ENCODE measurements at regions of chr12 and their contacts with region 1.

Region 1: DNA sequence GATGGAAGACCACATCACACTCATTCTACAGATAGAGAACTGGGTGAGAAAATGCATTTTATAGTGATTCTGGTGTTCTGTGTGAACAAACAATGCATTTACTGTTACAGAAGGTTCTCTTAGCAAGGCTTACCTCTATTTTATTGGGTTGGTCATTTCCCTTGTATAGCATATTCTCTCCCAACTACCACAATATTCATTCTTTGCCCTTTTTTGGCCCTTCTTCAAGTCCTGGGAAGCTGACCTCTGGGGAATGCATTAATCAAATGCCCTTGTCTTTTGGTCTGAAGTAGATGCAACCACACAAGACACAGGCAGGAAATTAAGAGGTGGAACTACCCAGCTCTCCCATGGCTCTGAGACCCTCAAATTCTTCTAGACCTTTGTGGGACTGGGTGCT is 19.5 kb downstream of the DCN start:
- DNase-seq: no peak
- ATAC-seq: no peak
- H3K4me3 ChIP-seq: no peak overlapping the region
- H3K27ac ChIP-seq: no peak overlapping the region
- H3K4me1 ChIP-seq: no peaks in the 10 kb centered on the region
- H3K27me3 ChIP-seq: no peaks in the 10 kb centered on the region
- CTCF ChIP-seq: no peak
- EP300 ChIP-seq: no peak
- POLR2A ChIP-seq: no peak
- RAD21 ChIP-seq: no peak

Region 2: GRCh38 chr12:89789862-89790261 is 1373.3 kb before region 1 on chr12:
- CTCF ChIA-PET with region 1: no interaction called
- POLR2A ChIA-PET with region 1: no interaction called
- in situ Hi-C with region 1: no loop called
- intact Hi-C with region 1: loop called (anchors 5 kb)
- DNase-seq: no peak
- ATAC-seq: no peak
- H3K4me3 ChIP-seq: no peak overlapping the region
- H3K27ac ChIP-seq: no peak overlapping the region
- H3K4me1 ChIP-seq: no peaks in the 10 kb centered on the region
- H3K27me3 ChIP-seq: no peaks in the 10 kb centered on the region
- CTCF ChIP-seq: no peak
- EP300 ChIP-seq: no peak
- POLR2A ChIP-seq: no peak
- RAD21 ChIP-seq: no peak

Region 3: DNA sequence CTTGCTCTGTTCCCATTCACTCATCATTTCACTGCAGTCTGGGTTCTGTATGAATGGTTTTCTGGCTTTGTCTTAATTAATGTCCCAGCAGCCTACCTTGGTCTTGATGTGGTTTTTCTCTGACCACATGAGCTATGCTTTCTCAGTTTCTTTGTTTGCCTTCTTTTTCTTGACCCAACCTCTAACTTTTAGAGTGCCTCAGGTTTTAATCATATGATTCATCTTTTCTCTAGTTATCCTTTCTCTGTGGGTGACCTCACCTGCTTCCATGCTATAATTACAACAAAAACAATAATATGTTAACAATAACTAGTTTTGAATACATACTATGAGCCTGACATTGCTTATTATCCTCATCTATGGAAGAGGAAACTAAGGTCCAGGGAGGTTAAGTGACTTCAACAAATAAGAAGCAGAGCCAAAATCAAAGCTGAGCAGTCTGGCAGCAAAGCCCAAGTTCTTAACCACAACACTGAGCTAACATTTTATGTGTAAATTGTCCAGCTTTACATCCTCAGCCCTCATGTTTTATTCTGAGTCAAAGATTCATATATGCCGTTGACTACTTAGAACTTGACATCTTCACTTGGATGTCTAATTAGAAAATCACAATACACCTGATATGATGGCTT is 153.7 kb before region 1 on chr12:
- CTCF ChIA-PET with region 1: no interaction called
- POLR2A ChIA-PET with region 1: no interaction called
- in situ Hi-C with region 1: no loop called
- intact Hi-C with region 1: no loop called
- DNase-seq: no peak
- ATAC-seq: no peak
- H3K4me3 ChIP-seq: no peak overlapping the region
- H3K27ac ChIP-seq: no peak overlapping the region
- H3K4me1 ChIP-seq: no peaks in the 10 kb centered on the region
- H3K27me3 ChIP-seq: no peaks in the 10 kb centered on the region
- CTCF ChIP-seq: no peak
- EP300 ChIP-seq: no peak
- POLR2A ChIP-seq: no peak
- RAD21 ChIP-seq: no peak

Measured in HepG2 (cell line).